Activated naive CD4-positive, alpha-beta T cell treated with anti-CD3 and anti-CD28 coated beads for 36 hours (primary cell): ENCODE measurements at regions of chr2 and their contacts with region 1.

Region 1: DNA sequence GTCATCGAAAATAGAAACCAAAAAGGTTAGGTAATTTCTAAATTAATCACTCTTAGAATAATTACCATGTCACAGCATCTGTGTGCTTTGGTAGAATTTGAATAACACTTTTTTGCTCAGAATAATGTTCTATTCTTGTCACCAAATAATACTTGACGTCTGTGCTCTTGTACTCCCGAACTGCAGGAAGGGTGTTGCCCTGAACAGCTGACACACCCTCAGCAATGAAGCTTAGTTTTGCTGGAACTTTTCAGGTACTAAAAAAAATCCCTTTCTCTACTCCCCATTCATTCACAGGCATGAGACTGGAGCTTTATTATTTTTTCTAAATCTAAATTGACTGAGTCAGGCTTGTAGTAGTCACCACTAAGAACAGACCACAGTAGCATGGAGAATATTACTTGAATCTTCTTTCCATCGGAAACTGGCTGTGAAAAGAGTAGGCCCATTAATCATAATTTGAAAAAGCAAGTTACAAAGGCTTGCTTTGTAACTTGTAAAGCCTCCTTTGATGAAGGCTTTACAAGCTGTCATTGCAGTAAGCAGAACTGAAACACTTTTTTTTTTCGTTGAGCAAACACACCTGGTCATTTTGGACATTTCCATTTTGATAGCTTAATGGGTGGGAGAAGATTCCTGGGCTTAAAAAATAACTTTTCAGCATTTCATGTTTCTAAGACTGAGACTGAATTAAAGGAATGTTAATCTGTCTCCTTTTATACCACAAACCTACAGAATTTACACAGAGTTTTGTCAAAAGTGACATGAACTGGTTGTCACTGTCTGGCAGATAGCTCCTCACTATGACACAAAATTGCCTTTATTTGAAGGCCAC is 70.3 kb upstream of the PELI1 start:
- DNase-seq: peak; percentile 62
- H3K4me3 Mint-ChIP-seq: peak overlapping the region; percentile 61
- H3K27ac Mint-ChIP-seq: peak overlapping the region; percentile 96
- H3K4me1 Mint-ChIP-seq: peaks cover 63% of the 10 kb centered on the region
- H3K27me3 Mint-ChIP-seq: no peaks in the 10 kb centered on the region

Region 2: DNA sequence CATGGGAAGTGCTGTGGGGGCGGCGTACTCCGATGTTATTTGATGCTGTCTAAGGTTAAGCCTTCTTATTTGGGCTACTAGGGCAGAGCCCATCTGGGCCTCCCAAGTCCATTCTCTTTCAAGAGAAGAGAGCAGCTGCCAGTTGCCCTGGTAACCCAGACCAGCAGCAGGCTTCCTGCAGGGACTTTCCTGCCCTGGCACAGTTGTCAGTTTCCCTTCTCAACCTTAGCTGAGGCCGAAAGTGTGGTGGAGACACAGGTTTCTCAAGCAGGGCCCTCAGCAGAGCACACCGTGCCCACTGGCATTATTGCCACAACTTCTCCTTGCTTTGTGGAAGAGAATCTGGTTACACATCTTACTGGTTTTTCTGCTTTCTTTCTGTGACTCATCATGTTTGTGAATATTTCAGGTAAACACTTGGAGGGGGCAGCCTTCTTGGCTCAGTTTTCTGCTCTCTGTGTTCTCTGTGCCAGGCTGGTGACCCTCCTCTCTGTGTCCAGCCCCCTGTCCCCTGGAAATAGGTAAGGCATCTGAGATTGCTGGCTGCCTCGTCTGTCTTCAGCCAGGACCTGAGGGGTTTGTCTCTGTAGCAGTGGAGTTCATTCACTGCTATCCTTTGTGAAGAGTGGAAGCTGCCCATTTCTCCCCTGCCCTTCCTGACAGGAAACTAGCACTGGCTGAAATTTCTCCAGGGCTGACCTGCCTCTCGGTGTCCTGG is 1907.6 kb before region 1 on chr2:
- CTCF ChIA-PET with region 1: no interaction called
- intact Hi-C with region 1: loop called (anchors 5 kb)
- DNase-seq: peak; percentile 73
- H3K4me3 Mint-ChIP-seq: no peak overlapping the region
- H3K27ac Mint-ChIP-seq: peak overlapping the region; percentile 90
- H3K4me1 Mint-ChIP-seq: peaks cover 74% of the 10 kb centered on the region
- H3K27me3 Mint-ChIP-seq: no peaks in the 10 kb centered on the region

Region 3: DNA sequence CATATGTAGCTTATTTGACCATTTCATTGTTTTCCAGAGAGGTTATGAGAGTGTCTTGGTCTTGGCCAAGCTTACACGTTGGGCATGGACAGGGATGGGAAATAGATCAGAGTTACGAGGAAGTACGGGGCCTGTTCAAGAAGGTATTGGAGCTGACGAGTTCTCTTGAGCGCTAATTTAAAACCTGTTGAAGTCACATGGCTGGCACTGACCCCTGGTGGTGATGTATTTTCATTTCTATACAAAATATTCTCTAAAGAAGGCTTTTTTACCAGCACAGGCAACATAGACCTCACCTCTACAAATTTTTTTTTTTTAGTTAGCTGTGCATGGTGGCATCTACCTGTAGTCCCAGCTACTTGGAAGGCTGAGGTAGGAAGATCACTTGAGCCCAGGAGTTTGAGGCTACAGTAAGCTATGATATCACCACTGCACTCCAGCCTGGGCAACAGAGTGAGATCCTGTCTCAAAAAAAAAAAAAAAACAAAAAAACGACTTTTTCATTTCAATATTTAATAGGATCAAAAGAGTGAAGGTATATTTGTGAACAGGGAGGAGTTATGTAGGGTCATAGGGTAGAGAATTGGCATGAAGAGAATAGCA is 353.2 kb before region 1 on chr2:
- CTCF ChIA-PET with region 1: no interaction called
- intact Hi-C with region 1: loop called (anchors 5 kb)
- DNase-seq: peak; percentile 73
- H3K4me3 Mint-ChIP-seq: no peak overlapping the region
- H3K27ac Mint-ChIP-seq: no peak overlapping the region
- H3K4me1 Mint-ChIP-seq: peaks cover 44% of the 10 kb centered on the region
- H3K27me3 Mint-ChIP-seq: no peaks in the 10 kb centered on the region

Region 4: DNA sequence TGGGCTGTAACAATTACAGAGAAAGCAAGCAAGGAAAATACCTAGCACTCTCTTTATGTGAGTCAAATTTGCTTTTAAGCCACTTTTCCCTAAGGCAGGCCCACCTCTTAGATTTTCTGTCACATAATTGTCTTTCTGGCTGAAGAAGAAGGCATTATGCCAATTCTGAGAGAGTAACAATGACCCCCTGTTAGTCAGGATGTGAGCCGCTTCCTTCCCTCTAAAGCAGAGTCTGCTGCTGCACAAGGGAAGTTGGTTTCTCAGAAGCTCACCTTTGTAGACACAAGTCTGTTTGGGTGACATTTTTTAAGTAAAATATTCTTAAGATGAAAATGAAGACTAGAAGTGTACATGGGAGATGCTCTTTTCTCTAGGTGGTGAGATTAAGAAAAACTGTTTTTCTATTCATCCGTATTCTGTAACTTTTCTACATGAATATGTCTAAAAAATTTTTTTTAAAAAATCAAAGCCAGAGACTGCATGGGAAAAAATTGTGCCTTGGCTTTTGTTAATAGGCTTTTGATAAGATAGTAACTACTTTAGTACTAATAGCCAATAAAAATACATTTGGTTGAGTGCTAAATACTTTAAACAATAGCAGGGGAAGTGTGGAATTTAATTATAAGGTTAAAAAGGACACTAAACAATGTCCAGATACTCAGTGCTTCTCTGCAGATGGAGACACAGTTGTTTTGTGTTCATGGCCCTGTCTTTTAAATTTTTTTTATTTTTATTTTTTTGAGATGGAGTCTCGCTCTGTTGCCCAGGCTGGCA is 161.8 kb before region 1 on chr2:
- CTCF ChIA-PET with region 1: no interaction called
- intact Hi-C with region 1: loop called (anchors 1 kb)
- DNase-seq: peak; percentile 38
- H3K4me3 Mint-ChIP-seq: no peak overlapping the region
- H3K27ac Mint-ChIP-seq: peak overlapping the region; percentile 8
- H3K4me1 Mint-ChIP-seq: peaks cover 39% of the 10 kb centered on the region
- H3K27me3 Mint-ChIP-seq: no peaks in the 10 kb centered on the region

Region 5: GRCh38 chr2:64114063-64114911 is 100.2 kb before region 1 on chr2:
- CTCF ChIA-PET with region 1: no interaction called
- intact Hi-C with region 1: loop called (anchors 1 kb)
- DNase-seq: no peak
- H3K4me3 Mint-ChIP-seq: no peak overlapping the region
- H3K27ac Mint-ChIP-seq: peak overlapping the region; percentile 1
- H3K4me1 Mint-ChIP-seq: peaks cover 80% of the 10 kb centered on the region
- H3K27me3 Mint-ChIP-seq: no peaks in the 10 kb centered on the region

Region 6: GRCh38 chr2:64203858-64204632 is 10.5 kb before region 1 on chr2:
- CTCF ChIA-PET with region 1: interaction called, 15 read pairs
- intact Hi-C with region 1: loop called (anchors 1 kb)
- DNase-seq: peak; percentile 75
- H3K4me3 Mint-ChIP-seq: peak overlapping the region; percentile 65
- H3K27ac Mint-ChIP-seq: peak overlapping the region; percentile 90
- H3K4me1 Mint-ChIP-seq: peaks cover 84% of the 10 kb centered on the region
- H3K27me3 Mint-ChIP-seq: no peaks in the 10 kb centered on the region

Region 7: GRCh38 chr2:64267699-64268098 is 53.2 kb after region 1 on chr2:
- CTCF ChIA-PET with region 1: no interaction called
- intact Hi-C with region 1: no loop called
- DNase-seq: no peak
- H3K4me3 Mint-ChIP-seq: no peak overlapping the region
- H3K27ac Mint-ChIP-seq: no peak overlapping the region
- H3K4me1 Mint-ChIP-seq: no peaks in the 10 kb centered on the region
- H3K27me3 Mint-ChIP-seq: no peaks in the 10 kb centered on the region

Region 8: GRCh38 chr2:64653349-64654062 is 439.0 kb after region 1 on chr2 and contains the start of gene SERTAD2:
- CTCF ChIA-PET with region 1: no interaction called
- intact Hi-C with region 1: loop called (anchors 5 kb)
- DNase-seq: peak; percentile 85
- H3K4me3 Mint-ChIP-seq: peak within 1 kb of the TSS; percentile 79
- H3K27ac Mint-ChIP-seq: peak within 1 kb of the TSS; percentile 83
- H3K4me1 Mint-ChIP-seq: peaks cover 74% of the 10 kb centered on the region
- H3K27me3 Mint-ChIP-seq: no peaks in the 10 kb centered on the region
- total RNA-seq, gene SERTAD2: 11.4 to 11.6 TPM